Transverse colon (tissue), 4 donors: ENCODE measurements at regions of chr6 and their contacts with region 1.

Region 1: GRCh38 chr6:34526992-34527728 is 29.0 kb downstream of the SPDEF start:
- DNase-seq: peak; percentile 98
- H3K4me3 ChIP-seq: peak overlapping the region in 1 of 4 donors; percentile 34
- H3K27ac ChIP-seq: peak overlapping the region in 2 of 4 donors; percentile 32 to 59
- H3K4me1 ChIP-seq: peaks cover 0 to 16% (median 14%) of the 10 kb centered on the region in 4 donors
- H3K27me3 ChIP-seq: no peaks in the 10 kb centered on the region
- CTCF ChIP-seq: peak; percentile 68 to 86 (median 75)
- EP300 ChIP-seq: no peak
- POLR2A ChIP-seq: no peak

Region 2: GRCh38 chr6:34602318-34603111 is 75.4 kb after region 1 on chr6:
- in situ Hi-C with region 1: loop called in 2 of 4 experiments (anchors 5 kb)
- intact Hi-C with region 1: no loop called
- DNase-seq: peak; percentile 50
- H3K4me3 ChIP-seq: no peak overlapping the region
- H3K27ac ChIP-seq: peak overlapping the region; percentile 41 to 66 (median 54)
- H3K4me1 ChIP-seq: peaks cover 6 to 48% (median 26%) of the 10 kb centered on the region in 4 donors
- H3K27me3 ChIP-seq: no peaks in the 10 kb centered on the region
- CTCF ChIP-seq: no peak
- EP300 ChIP-seq: no peak
- POLR2A ChIP-seq: no peak

Region 3: DNA sequence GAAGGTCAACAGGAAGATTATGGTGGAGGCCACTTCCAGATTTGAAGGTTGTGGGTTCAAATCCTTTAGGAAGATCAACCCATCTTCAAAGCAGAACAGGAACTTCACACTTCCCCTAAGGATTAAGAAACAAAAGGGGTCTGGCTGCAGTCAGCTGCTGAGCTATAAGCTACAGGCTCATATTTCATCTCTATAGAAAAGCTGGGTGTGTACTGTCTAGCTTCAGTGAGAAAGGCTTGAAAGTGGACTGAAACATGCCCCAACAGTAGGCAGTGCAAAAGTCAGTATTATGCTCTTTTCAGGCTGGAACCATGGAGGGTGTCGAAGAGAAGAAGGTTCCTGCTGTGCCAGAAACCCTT is 89.0 kb after region 1 on chr6:
- in situ Hi-C with region 1: no loop called
- intact Hi-C with region 1: loop called (anchors 5 kb)
- DNase-seq: no peak
- H3K4me3 ChIP-seq: no peak overlapping the region
- H3K27ac ChIP-seq: no peak overlapping the region
- H3K4me1 ChIP-seq: no peaks in the 10 kb centered on the region
- H3K27me3 ChIP-seq: no peaks in the 10 kb centered on the region
- CTCF ChIP-seq: no peak
- EP300 ChIP-seq: no peak
- POLR2A ChIP-seq: no peak